AG04449 (cell line): ENCODE measurements at regions of chr10 and their contacts with region 1.

Region 1: DNA sequence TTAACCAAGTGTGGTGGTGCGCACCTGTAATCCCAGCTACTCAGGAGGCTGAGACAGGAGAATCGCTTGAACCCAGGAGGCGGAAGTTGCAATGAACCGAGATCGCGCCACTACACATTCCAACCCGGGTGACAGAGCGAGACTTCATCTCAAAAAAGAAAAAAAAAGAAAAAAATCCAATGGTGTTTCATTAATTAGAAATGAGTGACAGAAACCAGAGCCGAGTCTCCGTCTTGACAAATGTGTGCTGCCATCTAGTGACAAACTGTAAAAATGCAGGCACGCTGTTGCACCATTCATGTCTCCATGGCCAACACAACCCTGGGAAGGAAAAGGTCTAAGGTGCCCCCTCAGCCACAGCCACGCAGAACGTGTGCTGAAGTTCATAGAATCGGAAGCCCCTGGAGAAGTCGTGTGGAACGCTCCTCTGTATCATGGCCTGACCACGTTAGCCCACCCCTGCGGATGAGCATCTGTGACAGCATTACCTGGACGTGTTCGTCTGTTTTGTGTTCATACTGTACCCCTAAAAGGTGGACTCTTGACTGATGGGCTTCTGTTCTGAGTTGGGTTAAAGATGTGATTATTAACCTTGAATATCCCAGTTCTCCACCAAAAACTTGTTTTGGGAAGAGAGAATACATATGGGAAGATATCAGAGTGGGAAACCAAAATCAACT is 94.9 kb downstream of the LYZL2 start:
- DNase-seq: no peak
- H3K4me3 ChIP-seq: no peak overlapping the region
- CTCF ChIP-seq: peak; percentile 79

Region 2: DNA sequence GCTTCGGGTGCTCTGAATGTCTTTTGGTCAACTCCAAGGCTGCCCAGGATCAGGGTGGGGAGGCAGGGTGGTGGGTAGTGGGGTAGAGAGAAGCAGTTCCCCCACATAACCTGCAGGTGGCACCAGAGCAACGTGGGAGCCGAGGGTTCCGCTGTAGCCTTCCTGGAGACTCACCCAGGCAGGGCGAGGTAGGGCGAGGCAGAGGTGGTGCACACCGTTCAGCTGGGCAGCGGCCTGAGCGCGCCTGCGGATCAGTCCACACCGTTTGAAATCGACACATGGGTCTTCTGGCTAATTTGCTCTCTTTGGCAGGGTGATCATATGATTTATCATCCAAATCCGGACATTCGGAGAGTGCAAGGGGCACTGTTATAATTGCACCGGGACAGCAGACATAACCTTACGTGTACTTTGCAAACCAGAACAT is 142.0 kb before region 1 on chr10:
- CTCF ChIA-PET with region 1: interaction called, 68 read pairs
- POLR2A ChIA-PET with region 1: no interaction called
- DNase-seq: no peak
- H3K4me3 ChIP-seq: no peak overlapping the region
- CTCF ChIP-seq: peak; percentile 95

Region 3: GRCh38 chr10:30413996-30414576 is 120.5 kb before region 1 on chr10:
- CTCF ChIA-PET with region 1: interaction called, 52 read pairs
- POLR2A ChIA-PET with region 1: no interaction called
- DNase-seq: no peak
- H3K4me3 ChIP-seq: no peak overlapping the region
- CTCF ChIP-seq: peak; percentile 76

Region 4: GRCh38 chr10:30442019-30442606 is 92.5 kb before region 1 on chr10:
- CTCF ChIA-PET with region 1: interaction called, 10 read pairs
- POLR2A ChIA-PET with region 1: no interaction called
- DNase-seq: no peak
- H3K4me3 ChIP-seq: no peak overlapping the region
- CTCF ChIP-seq: no peak

Region 5: GRCh38 chr10:30583778-30584415 is 49.3 kb after region 1 on chr10:
- CTCF ChIA-PET with region 1: interaction called, 11 read pairs
- POLR2A ChIA-PET with region 1: no interaction called
- DNase-seq: no peak
- H3K4me3 ChIP-seq: peak overlapping the region; percentile 40
- CTCF ChIP-seq: no peak